ENCODE measurements at regions of chr11 and their contacts with region 1.

Region 1: DNA sequence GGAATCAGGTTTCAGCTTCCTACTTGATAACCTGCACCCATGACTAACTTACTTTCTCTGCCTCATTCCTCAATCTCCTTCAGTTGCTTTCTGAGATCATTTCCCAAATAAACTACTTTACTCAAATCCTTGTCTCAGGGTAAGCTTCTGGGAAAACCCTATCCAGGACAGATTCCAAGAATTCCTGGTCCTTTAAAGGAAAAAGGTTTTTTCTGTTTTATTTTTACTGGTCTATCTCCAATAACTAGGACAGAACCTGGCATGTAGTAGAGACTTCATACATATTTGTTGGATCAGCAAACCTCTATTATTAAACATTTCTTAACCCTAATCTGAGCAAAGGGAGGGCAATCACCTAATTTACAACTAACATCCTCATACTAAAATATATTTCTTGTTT is 910.5 kb upstream of the CHORDC1 start:
- DNase-seq: no peak
- H3K4me3 ChIP-seq: no peak overlapping the region
- H3K27ac ChIP-seq: no peak overlapping the region
- H3K4me1 ChIP-seq: no peaks in the 10 kb centered on the region
- H3K27me3 ChIP-seq: no peaks in the 10 kb centered on the region
- CTCF ChIP-seq: no peak
- POLR2A ChIP-seq: no peak

Region 2: GRCh38 chr11:91248199-91248807 is 114.9 kb after region 1 on chr11:
- intact Hi-C with region 1: no loop called
- DNase-seq: no peak
- H3K4me3 ChIP-seq: no peak overlapping the region
- H3K27ac ChIP-seq: no peak overlapping the region
- H3K4me1 ChIP-seq: no peaks in the 10 kb centered on the region
- H3K27me3 ChIP-seq: no peaks in the 10 kb centered on the region
- CTCF ChIP-seq: peak in 1 of 3 donors; percentile 44
- POLR2A ChIP-seq: no peak

Region 3: GRCh38 chr11:91664521-91664920 is 531.2 kb after region 1 on chr11:
- intact Hi-C with region 1: loop called (anchors 5 kb)
- DNase-seq: no peak
- H3K4me3 ChIP-seq: no peak overlapping the region
- H3K27ac ChIP-seq: no peak overlapping the region
- H3K4me1 ChIP-seq: no peaks in the 10 kb centered on the region
- H3K27me3 ChIP-seq: no peaks in the 10 kb centered on the region
- CTCF ChIP-seq: no peak
- POLR2A ChIP-seq: no peak

Region 4: DNA sequence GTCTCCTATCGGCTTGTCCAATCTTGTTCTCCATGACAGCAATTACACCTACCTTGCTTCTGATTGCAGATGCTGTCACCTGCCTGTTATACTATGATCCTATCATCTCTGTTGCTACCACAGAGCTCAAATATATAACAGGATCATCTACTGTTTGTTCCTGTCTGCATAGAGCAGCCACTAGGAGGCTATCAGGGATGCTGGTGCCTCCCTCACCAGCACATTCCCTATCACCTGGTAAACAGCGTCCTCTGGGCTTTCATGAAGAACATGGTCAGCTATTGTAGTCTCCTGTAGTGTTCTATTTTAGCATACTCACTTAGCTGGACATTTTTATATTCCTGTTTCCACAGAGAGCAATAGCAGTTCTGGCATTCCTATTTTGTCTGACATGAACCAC is 1003.4 kb after region 1 on chr11:
- intact Hi-C with region 1: loop called (anchors 5 kb)
- DNase-seq: no peak
- H3K4me3 ChIP-seq: no peak overlapping the region
- H3K27ac ChIP-seq: no peak overlapping the region
- H3K4me1 ChIP-seq: no peaks in the 10 kb centered on the region
- H3K27me3 ChIP-seq: no peaks in the 10 kb centered on the region
- CTCF ChIP-seq: no peak
- POLR2A ChIP-seq: no peak